B cell (primary cell): ENCODE measurements at regions of chr1 and their contacts with region 1.

Region 1: GRCh38 chr1:86380257-86380861 is 15.8 kb downstream of the ODF2L start:
- DNase-seq: peak; percentile 68
- ATAC-seq: peak; percentile 63
- H3K4me3 ChIP-seq: no peak overlapping the region
- H3K4me3 Mint-ChIP-seq: no peak overlapping the region
- H3K27ac ChIP-seq: no peak overlapping the region
- H3K27ac Mint-ChIP-seq: no peak overlapping the region
- H3K4me1 ChIP-seq: peaks cover 0 to 4% of the 10 kb centered on the region in 2 donors
- H3K4me1 Mint-ChIP-seq: peaks cover 8% of the 10 kb centered on the region
- H3K27me3 ChIP-seq: no peaks in the 10 kb centered on the region
- H3K27me3 Mint-ChIP-seq: no peaks in the 10 kb centered on the region
- CTCF ChIP-seq: peak; percentile 88

Region 2: DNA sequence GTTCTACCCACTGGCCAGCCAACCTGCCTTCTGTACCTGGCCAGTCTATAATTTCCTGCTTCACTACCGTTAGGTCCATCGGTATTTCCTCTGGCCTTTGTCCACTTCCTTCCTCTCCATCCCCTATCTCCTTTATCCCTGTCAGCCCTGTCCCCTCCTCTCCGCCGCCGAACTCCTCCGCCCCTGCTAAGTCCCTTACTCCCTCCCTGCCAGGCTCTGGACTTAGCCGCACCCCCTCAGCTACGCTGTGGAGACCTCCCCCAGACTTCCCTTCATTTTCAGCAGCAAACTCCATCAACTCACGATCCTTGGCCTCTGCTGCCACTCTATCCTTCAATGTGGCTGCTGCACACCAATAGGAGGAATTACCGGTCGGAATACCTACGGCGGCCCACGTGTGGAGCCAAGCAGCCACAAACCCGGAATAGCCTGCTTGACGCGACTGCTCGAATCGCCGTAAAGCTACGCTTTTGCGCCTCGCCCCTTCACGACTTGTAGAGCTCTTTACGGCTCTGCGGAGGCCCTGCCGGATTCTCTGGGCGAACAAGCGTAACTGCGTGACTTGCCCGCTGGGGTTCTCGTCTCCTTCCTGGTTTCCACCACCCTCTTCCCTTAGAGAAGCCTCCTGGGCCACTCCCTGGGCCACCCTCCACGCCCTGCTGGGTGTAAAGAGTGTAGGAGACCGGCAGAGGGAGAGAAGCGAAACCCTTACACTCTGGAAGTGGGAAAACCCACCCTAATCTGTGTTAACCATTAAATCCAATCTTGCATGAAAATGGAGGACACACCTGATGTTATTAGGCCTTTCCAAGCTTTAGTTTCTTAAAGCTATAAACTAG is 672.1 kb before region 1 on chr1 and contains the start of gene ZNHIT6:
- CTCF ChIA-PET with region 1: no interaction called
- POLR2A ChIA-PET with region 1: no interaction called
- intact Hi-C with region 1: loop called (anchors 10 kb)
- DNase-seq: peak; percentile 92
- ATAC-seq: peak; percentile 95
- H3K4me3 ChIP-seq: peak within 1 kb of the TSS; percentile 76 to 99 (median 91)
- H3K4me3 Mint-ChIP-seq: no peak within 1 kb of the TSS
- H3K27ac ChIP-seq: peak within 1 kb of the TSS; percentile 73
- H3K27ac Mint-ChIP-seq: no peak within 1 kb of the TSS
- H3K4me1 ChIP-seq: peaks cover 16 to 22% of the 10 kb centered on the region in 2 donors
- H3K4me1 Mint-ChIP-seq: peaks cover 16% of the 10 kb centered on the region
- H3K27me3 ChIP-seq: peaks cover 0 to under 1% (median 0%) of the 10 kb centered on the region in 4 experiments
- H3K27me3 Mint-ChIP-seq: no peaks in the 10 kb centered on the region
- CTCF ChIP-seq: peak; percentile 27
- total RNA-seq, gene ZNHIT6: 16.3 and 17.3 TPM in 2 replicates

Region 3: GRCh38 chr1:86419277-86419903 is 39.0 kb after region 1 on chr1:
- CTCF ChIA-PET with region 1: interaction called, 3 read pairs
- POLR2A ChIA-PET with region 1: no interaction called
- intact Hi-C with region 1: loop called (anchors 1 kb)
- DNase-seq: peak; percentile 69
- ATAC-seq: peak; percentile 92
- H3K4me3 ChIP-seq: peak overlapping the region in 3 of 5 experiments; percentile 16 to 42 (median 41)
- H3K4me3 Mint-ChIP-seq: peak overlapping the region; percentile 74
- H3K27ac ChIP-seq: no peak overlapping the region
- H3K27ac Mint-ChIP-seq: peak overlapping the region; percentile 43
- H3K4me1 ChIP-seq: peaks cover 0 to 3% of the 10 kb centered on the region in 2 donors
- H3K4me1 Mint-ChIP-seq: peaks cover 4% of the 10 kb centered on the region
- H3K27me3 ChIP-seq: no peaks in the 10 kb centered on the region
- H3K27me3 Mint-ChIP-seq: no peaks in the 10 kb centered on the region
- CTCF ChIP-seq: peak; percentile 80

Region 4: DNA sequence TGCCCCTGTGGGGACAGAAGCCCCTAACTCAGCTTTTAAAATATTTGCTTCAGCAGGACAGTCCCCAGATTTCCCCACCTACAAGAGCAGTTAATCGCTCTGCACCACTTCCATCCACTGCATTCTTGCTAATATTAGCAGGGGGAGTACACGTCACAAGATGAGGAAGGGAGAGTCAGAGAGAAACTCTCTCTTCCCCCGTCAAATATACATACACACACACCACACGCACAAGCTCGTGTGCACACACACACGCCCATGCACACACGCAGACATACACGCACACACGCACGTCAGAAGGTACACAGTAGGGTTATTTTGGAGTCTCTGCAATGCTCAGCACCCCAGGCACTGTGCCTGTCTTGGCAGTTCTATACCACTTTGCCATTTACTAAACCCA is 90.5 kb after region 1 on chr1:
- CTCF ChIA-PET with region 1: interaction called, 28 read pairs
- POLR2A ChIA-PET with region 1: no interaction called
- intact Hi-C with region 1: loop called (anchors 1 kb)
- DNase-seq: no peak
- ATAC-seq: no peak
- H3K4me3 ChIP-seq: no peak overlapping the region
- H3K4me3 Mint-ChIP-seq: no peak overlapping the region
- H3K27ac ChIP-seq: no peak overlapping the region
- H3K27ac Mint-ChIP-seq: no peak overlapping the region
- H3K4me1 ChIP-seq: no peaks in the 10 kb centered on the region
- H3K4me1 Mint-ChIP-seq: peaks cover 4% of the 10 kb centered on the region
- H3K27me3 ChIP-seq: peaks cover 0 to 3% (median 0%) of the 10 kb centered on the region in 4 experiments
- H3K27me3 Mint-ChIP-seq: peaks cover 13% of the 10 kb centered on the region
- CTCF ChIP-seq: no peak

Region 5: DNA sequence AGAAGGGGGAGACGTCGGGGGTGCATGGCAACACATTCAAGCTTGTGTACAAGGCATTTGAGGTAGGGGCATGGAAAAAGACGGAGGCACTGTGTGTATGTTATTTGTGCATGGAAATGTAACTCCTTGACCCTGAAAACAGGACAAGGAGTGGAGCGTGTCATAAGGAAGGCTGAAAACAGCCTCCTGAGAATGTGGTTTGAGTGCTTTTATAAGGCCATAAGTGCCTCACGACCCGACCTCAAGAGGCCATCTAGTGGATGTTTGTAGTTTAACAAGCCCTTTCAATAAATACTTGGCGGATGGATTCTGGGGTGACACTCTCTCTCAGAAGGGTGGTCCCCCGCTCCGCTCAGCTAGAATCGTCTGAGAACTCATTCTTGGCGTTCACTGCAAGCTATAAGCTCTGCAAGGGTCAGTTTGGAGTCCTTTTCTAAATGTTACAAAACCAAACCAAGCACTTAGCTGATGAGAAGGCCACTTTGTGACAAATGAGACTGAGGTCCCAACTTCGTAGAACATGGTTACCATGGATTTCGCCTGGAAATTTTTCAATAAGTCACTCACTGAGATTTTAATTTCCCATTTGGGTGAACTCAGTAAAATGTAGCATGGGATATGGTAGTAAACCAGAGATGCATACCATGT is 127.7 kb after region 1 on chr1:
- CTCF ChIA-PET with region 1: interaction called, 53 read pairs
- POLR2A ChIA-PET with region 1: no interaction called
- intact Hi-C with region 1: no loop called
- DNase-seq: peak; percentile 41
- ATAC-seq: no peak
- H3K4me3 ChIP-seq: no peak overlapping the region
- H3K4me3 Mint-ChIP-seq: no peak overlapping the region
- H3K27ac ChIP-seq: no peak overlapping the region
- H3K27ac Mint-ChIP-seq: no peak overlapping the region
- H3K4me1 ChIP-seq: peaks cover 0 to 12% of the 10 kb centered on the region in 2 donors
- H3K4me1 Mint-ChIP-seq: no peaks in the 10 kb centered on the region
- H3K27me3 ChIP-seq: peaks cover 0 to 6% (median 2%) of the 10 kb centered on the region in 4 experiments
- H3K27me3 Mint-ChIP-seq: peaks cover 25% of the 10 kb centered on the region
- CTCF ChIP-seq: peak; percentile 62

Region 6: DNA sequence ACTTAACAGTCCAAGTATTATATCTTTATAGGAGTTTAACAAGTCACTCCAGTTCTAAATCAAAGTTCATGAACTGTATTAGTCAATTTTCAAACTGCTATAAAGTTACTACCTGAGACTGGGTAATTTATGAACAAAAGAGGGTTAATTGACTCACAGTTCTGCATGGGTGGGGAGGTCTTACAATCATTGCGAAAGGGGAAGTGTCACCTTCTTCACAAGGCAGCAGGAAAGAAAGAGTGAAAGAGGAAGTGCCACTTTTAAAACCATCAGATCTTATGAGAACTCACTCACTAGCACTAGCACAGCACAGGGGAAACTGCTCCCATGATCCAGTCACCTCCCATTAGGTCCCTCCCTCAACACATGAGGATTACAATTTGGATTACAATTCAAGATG is 236.5 kb after region 1 on chr1:
- CTCF ChIA-PET with region 1: no interaction called
- POLR2A ChIA-PET with region 1: no interaction called
- intact Hi-C with region 1: loop called (anchors 5 kb)
- DNase-seq: peak; percentile 88
- ATAC-seq: peak; percentile 99
- H3K4me3 ChIP-seq: peak overlapping the region in 1 of 5 experiments; percentile 31
- H3K4me3 Mint-ChIP-seq: peak overlapping the region; percentile 27
- H3K27ac ChIP-seq: peak overlapping the region; percentile 65 to 77
- H3K27ac Mint-ChIP-seq: peak overlapping the region; percentile 70
- H3K4me1 ChIP-seq: peaks cover 22 to 23% of the 10 kb centered on the region in 2 donors
- H3K4me1 Mint-ChIP-seq: peaks cover 42% of the 10 kb centered on the region
- H3K27me3 ChIP-seq: no peaks in the 10 kb centered on the region
- H3K27me3 Mint-ChIP-seq: no peaks in the 10 kb centered on the region
- CTCF ChIP-seq: no peak

Region 7: DNA sequence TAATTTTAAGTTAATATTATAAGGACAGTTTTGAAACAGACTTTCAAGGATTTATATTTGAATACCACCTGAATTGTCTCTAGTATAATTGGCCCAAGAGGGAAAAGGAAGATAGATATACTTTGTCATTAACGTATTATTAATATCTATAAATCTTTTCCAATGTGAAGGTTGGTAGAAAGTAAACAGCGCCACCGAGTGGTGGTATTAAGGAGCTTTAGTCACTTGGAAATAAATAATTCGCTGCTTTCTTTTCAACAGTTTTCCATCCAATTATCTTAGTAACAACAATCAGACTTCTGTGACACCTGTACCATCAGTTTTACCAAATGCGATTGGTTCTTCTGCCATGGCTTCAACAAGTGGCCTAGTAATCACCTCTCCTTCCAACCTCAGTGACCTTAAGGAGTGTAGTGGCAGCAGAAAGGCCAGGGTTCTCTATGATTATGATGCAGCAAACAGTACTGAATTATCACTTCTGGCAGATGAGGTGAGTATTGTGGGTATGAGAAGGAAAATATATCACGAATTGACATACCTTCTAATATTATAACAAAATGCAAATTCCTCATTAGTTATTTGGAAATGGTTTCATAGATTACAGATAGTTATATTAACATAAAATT is 361.7 kb after region 1 on chr1:
- CTCF ChIA-PET with region 1: interaction called, 6 read pairs
- POLR2A ChIA-PET with region 1: no interaction called
- intact Hi-C with region 1: loop called (anchors 1 kb)
- DNase-seq: peak; percentile 50
- ATAC-seq: no peak
- H3K4me3 ChIP-seq: no peak overlapping the region
- H3K4me3 Mint-ChIP-seq: no peak overlapping the region
- H3K27ac ChIP-seq: no peak overlapping the region
- H3K27ac Mint-ChIP-seq: no peak overlapping the region
- H3K4me1 ChIP-seq: peaks cover 7 to 10% of the 10 kb centered on the region in 2 donors
- H3K4me1 Mint-ChIP-seq: no peaks in the 10 kb centered on the region
- H3K27me3 ChIP-seq: no peaks in the 10 kb centered on the region
- H3K27me3 Mint-ChIP-seq: no peaks in the 10 kb centered on the region
- CTCF ChIP-seq: peak; percentile 88